ENCODE measurements at regions of chr9 and their contacts with region 1.

Region 1: GRCh38 chr9:34500623-34501267 is 22.0 kb downstream of the ENHO start:
- DNase-seq: peak; percentile 64
- H3K4me3 ChIP-seq: no peak overlapping the region
- H3K27ac ChIP-seq: no peak overlapping the region
- H3K4me1 ChIP-seq: peaks cover 29% of the 10 kb centered on the region
- H3K27me3 ChIP-seq: no peaks in the 10 kb centered on the region
- CTCF ChIP-seq: peak; percentile 98

Region 2: GRCh38 chr9:34328987-34329832 is 171.5 kb before region 1 on chr9 and contains the starts of genes KIF24 and NUDT2:
- CTCF ChIA-PET with region 1: no interaction called
- dilution Hi-C with region 1: no loop called
- in situ Hi-C with region 1: no loop called
- intact Hi-C with region 1: loop called (anchors 5 kb)
- DNase-seq: peak; percentile 100
- H3K4me3 ChIP-seq: peak within 1 kb of the TSS; percentile 85 to 89 (median 86)
- H3K27ac ChIP-seq: peak within 1 kb of the TSS; percentile 96
- H3K4me1 ChIP-seq: peaks cover 45% of the 10 kb centered on the region
- H3K27me3 ChIP-seq: no peaks in the 10 kb centered on the region
- CTCF ChIP-seq: no peak
- total RNA-seq, gene KIF24: 1.3 to 3.9 TPM
- total RNA-seq, gene NUDT2: 17.8 to 22.9 TPM

Region 3: GRCh38 chr9:34403554-34404380 is 97.0 kb before region 1 on chr9:
- CTCF ChIA-PET with region 1: interaction called, 8 read pairs
- dilution Hi-C with region 1: no loop called
- in situ Hi-C with region 1: loop called in 1 of 2 experiments (anchors 10 kb)
- intact Hi-C with region 1: loop called (anchors 1 kb)
- DNase-seq: peak; percentile 45
- H3K4me3 ChIP-seq: no peak overlapping the region
- H3K27ac ChIP-seq: no peak overlapping the region
- H3K4me1 ChIP-seq: no peaks in the 10 kb centered on the region
- H3K27me3 ChIP-seq: no peaks in the 10 kb centered on the region
- CTCF ChIP-seq: peak; percentile 97 to 99

Region 4: DNA sequence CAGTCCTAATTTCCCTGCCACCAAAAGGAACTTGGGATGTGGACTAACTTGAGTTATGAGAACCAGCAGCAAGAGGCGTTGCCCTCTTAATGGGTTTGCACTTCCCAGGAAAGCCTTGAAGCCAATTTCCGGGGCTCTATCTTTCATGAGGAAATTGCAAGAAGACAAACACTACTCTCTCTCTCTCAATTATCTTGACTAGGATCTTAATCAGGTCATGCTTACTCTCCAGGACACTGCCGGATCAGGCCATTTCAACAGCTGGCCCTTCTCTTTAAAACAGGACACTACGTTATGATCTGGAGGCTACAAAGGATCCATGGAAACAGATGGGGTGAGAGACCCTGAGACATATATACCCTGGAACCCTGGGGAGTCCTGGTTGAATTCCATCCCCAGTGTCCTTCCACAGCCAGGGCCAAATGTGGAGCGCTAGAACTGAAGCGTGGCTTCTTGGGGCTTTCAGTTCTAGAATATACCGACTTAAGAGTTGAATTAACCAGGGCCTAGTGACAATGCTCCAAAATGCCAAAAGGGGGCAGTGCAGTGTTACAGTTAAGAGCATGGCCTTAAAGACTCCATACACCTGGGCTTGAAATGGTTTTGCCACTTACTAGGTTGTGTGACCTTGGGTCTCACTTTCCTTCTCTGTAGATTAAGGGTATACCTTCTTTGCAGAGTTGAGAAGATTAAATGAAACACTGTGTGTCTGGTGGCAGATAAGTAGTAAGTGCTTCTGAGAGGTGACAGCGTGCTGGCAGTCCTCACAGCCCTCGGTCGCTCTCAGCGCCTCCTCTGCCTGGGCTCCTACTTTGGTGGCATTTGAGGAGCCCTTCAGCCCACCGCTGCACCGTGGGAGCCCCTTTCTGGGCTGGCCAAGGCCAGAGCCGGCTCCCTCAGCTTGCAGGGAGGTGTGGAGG is 63.5 kb before region 1 on chr9:
- CTCF ChIA-PET with region 1: interaction called, 3 read pairs
- dilution Hi-C with region 1: no loop called
- in situ Hi-C with region 1: no loop called
- intact Hi-C with region 1: loop called (anchors 1 kb)
- DNase-seq: peak; percentile 61
- H3K4me3 ChIP-seq: no peak overlapping the region
- H3K27ac ChIP-seq: no peak overlapping the region
- H3K4me1 ChIP-seq: no peaks in the 10 kb centered on the region
- H3K27me3 ChIP-seq: no peaks in the 10 kb centered on the region
- CTCF ChIP-seq: peak; percentile 79 to 93

Region 5: DNA sequence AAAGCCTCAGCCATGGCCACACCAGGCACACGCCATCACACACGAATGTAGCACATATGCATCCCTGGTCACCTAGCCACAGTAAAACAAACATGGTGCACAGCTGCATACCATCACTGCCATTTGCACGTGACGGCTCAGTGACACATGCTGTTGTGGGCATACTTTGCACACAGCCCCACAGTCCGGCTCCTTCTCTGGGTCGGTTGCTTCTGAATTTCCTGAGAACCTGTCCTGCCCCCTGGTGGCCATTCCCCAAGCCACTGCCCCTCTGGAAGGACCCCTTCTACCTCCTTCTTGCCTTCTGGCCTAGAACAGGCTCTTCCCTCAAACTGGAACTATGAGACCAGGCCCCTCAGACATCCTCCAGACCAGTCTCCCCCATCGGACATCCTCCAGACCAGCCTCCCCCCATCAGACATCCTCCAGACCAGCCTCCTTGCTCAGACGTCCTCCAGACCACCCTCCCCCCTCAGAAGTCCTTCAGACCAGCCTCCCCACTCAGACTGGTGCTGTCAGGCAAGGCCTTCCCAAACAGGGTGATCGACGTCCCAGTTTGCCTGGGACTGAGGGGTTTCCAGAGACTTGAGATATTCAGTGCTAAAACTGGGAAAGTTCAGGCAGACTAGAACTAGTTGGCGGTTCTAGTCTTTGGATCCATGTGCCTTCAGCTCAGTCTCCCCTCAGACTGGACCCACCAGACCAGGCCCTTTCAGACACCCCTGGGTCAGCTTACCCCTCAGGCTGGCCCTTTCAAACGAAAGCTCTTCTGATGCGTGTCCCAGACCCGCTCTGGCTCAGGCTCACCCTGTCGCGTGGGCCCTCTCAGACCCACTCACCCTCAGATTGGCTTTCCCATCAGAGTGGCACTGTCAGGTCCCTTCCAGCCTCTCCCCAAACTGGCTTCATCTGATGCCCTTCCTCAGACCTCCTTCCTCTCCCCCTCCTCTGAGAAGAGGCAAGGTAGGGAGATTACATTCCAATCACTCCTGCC is 46.4 kb after region 1 on chr9:
- CTCF ChIA-PET with region 1: interaction called, 4 read pairs
- dilution Hi-C with region 1: no loop called
- in situ Hi-C with region 1: no loop called
- intact Hi-C with region 1: loop called (anchors 5 kb)
- DNase-seq: peak; percentile 59
- H3K4me3 ChIP-seq: no peak overlapping the region
- H3K27ac ChIP-seq: no peak overlapping the region
- H3K4me1 ChIP-seq: no peaks in the 10 kb centered on the region
- H3K27me3 ChIP-seq: no peaks in the 10 kb centered on the region
- CTCF ChIP-seq: peak; percentile 58 to 77

Region 6: GRCh38 chr9:34603610-34604231 is 103.0 kb after region 1 on chr9:
- CTCF ChIA-PET with region 1: interaction called, 3 read pairs
- dilution Hi-C with region 1: no loop called
- in situ Hi-C with region 1: no loop called
- intact Hi-C with region 1: loop called (anchors 1 kb)
- DNase-seq: peak; percentile 54
- H3K4me3 ChIP-seq: no peak overlapping the region
- H3K27ac ChIP-seq: no peak overlapping the region
- H3K4me1 ChIP-seq: peaks cover 15% of the 10 kb centered on the region
- H3K27me3 ChIP-seq: no peaks in the 10 kb centered on the region
- CTCF ChIP-seq: peak; percentile 92 to 96